Sciatic nerve (tissue), 2 donors: ENCODE measurements at regions of chr10 and their contacts with region 1.

Region 1: DNA sequence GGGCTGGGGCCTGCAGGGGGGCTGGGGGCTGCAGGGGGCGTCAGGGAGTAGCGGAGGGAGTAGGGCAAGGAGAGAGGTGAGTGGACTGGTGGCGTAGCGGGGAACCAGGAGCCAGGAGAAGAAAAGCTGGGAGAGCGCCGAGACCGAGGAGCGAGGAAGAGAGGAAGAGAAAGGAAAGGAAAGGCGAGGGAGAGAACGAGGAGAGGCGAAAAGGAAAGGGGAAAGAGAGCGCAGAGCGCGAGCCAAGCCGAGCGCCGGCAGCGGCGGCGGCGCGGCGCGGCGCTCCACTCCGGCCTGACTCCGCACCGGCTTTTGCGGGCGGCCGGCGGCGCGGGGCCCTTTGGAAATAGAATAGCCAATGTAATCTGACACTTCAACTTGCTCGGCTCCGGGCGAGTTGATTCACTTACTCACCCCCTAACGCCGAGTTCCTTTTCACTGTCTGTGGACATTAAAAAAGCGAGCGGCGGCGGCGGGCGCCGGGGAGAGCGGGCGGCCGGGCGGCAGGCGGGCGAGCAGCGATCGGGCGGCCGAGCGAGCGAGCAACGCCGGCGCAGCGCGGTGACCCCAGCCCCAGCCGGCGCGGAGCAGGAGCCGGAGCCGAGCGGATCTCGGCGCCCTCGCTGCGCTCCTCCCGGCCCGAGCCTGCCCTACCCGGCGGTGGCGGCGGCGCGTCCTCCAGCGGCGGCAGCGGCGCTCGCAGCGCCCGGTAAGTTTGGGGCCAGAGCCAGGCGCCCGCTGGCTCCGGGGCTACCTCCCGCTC is at the start of gene ZMIZ1:
- DNase-seq: peak; percentile 93
- ATAC-seq: peak; percentile 20
- total RNA-seq, gene ZMIZ1: 96.7 TPM

Region 2: GRCh38 chr10:78302989-78303854 is 765.5 kb before region 1 on chr10:
- intact Hi-C with region 1: loop called (anchors 5 kb)
- DNase-seq: peak; percentile 96
- ATAC-seq: peak; percentile 95

Region 3: DNA sequence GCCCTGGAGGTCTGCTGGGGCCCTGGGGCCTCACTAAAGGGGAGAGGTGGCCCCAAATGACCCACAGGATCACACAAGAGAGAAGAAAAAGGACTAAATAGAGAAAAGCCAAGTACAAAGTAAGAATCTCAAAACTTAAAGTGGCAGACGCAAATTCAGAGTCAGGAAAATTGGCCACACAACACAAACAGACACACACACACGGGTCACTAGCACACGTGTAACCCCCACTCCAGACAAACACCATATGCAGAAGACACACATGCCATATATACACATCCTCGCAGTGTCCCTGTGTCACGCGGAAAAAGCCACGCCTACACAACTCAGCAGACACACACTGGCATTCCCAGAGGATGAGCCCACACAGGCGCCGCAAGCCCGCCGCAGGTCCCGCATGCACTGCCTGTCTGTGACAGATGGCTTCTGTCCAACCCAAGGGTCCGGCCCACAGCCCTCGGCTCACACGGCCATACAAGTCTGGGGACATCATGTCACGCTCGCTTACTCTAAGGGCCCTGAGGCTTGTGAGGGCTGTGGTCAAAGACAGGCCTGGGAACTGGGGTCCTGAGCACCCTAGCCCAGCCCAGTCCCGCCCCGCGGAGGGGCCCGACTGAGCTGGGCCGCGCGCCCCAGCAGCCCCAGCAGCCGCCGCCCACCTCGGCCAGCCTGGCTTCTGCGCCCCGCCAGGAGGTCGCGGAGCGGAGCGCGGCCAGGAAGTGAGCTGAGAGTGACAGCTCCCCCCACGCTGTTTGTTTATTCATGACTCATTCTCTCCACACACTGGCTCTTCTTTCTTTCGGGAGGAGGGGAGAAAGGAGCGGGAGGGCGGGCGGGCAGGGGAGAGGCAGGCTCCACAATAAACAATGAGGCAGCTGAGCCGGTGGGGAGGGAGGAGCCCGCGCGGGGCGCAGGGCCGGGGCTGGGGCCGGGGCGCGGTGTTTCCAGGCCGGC is 95.5 kb before region 1 on chr10:
- intact Hi-C with region 1: loop called (anchors 1 kb)
- DNase-seq: peak; percentile 88
- ATAC-seq: peak; percentile 53

Region 4: GRCh38 chr10:79038841-79039201 is 29.9 kb before region 1 on chr10:
- intact Hi-C with region 1: no loop called
- DNase-seq: peak; percentile 26
- ATAC-seq: no peak

Region 5: DNA sequence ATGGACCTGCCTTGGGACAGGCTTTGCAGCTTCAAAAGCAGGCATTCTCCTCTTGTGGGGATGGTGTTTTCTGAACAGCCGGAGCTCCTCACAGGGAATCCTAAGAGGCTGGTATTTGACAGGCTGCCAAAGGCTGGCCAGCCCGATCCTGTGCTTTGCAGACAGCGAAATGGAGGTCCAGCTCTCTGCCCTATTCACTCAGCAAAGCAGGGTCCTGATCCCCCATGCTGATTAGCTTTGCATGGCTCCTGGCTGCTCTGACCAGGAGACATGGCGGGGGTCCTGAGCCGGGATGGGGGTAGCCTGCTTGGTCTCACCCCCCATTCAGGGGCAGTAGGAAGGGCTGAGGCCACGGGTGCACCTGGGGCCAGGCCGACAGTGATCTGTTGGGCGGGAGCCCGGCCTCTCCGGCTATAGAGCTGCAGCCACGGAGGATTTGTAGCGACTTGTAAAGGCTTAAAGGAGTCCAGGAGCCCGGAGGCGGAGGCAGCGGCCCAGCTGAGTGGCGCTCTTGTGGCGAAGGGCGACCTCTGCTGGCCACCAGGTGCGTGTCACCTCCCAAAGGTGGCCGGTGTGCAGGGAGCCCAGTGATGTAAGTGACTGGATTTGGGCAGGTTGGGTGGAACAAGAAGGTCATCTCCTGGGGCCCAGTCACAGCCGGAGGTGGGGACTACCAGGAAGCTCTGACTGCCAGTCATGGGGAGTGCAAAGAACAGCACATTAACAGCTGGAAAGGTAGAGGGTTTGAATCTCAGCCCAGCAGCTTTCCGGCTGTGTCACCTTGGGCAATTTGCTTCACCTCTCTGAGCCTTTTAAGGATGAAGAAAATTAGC is 126.6 kb after region 1 on chr10:
- intact Hi-C with region 1: loop called (anchors 10 kb)
- DNase-seq: peak; percentile 91
- ATAC-seq: peak; percentile 90